ENCODE measurements at regions of chr12 and their contacts with region 1.

Region 1: DNA sequence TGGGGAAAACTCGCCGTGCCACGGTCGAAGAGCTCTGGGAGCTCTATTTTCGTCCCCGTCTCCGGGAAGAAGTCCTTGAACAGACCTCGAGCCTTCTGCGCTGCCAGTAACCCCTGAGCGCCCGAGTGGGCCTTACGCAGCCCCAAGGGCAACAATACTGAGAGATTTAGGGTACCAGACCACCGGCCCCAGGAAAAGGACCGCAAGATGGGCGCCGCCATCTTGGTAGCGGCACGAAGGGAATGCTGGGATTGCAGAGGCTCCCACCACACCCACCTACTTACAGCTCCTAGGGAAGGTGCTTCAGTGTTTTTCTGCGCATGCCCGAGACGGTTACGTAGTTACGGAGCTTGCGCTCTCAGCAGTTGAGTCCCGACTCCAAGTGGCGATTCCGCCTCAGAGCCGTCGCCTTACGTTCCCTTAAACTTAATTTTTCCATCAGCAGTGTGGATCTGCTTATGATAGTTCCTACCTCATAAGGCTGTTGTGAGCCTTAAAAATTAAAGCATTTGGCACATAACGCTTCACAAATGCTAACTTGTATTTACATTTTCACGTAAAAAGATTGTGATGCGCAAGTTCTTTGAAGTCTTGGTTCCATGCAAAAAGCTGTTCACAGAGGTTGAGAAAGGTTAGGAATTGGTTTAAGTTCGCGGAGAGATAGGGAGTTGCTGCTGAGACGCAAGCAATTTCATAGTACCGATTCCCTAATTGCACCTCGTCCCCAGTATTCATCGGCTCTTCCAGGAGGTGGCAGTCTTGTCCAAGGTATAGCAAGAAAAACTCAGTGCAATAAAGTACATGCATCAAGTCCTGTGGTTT is at the start of gene YARS2:
- DNase-seq: peak; percentile 93 to 97 (median 95)
- H3K4me3 ChIP-seq: peak within 1 kb of the TSS; percentile 86 to 100 (median 94)
- H3K27ac ChIP-seq: peak within 1 kb of the TSS; percentile 82 to 89
- H3K4me1 ChIP-seq: peaks cover 12 to 21% (median 14%) of the 10 kb centered on the region in 4 experiments
- H3K27me3 ChIP-seq: no peaks in the 10 kb centered on the region

Region 2: GRCh38 chr12:32918890-32919801 is 163.3 kb after region 1 on chr12:
- CTCF ChIA-PET with region 1: interaction called, 52 read pairs
- POLR2A ChIA-PET with region 1: interaction called, 3 read pairs
- DNase-seq: peak; percentile 29 to 49 (median 45)
- H3K4me3 ChIP-seq: no peak overlapping the region
- H3K27ac ChIP-seq: no peak overlapping the region
- H3K4me1 ChIP-seq: no peaks in the 10 kb centered on the region
- H3K27me3 ChIP-seq: peaks cover 0 to 2% (median 0%) of the 10 kb centered on the region in 5 experiments

Region 3: DNA sequence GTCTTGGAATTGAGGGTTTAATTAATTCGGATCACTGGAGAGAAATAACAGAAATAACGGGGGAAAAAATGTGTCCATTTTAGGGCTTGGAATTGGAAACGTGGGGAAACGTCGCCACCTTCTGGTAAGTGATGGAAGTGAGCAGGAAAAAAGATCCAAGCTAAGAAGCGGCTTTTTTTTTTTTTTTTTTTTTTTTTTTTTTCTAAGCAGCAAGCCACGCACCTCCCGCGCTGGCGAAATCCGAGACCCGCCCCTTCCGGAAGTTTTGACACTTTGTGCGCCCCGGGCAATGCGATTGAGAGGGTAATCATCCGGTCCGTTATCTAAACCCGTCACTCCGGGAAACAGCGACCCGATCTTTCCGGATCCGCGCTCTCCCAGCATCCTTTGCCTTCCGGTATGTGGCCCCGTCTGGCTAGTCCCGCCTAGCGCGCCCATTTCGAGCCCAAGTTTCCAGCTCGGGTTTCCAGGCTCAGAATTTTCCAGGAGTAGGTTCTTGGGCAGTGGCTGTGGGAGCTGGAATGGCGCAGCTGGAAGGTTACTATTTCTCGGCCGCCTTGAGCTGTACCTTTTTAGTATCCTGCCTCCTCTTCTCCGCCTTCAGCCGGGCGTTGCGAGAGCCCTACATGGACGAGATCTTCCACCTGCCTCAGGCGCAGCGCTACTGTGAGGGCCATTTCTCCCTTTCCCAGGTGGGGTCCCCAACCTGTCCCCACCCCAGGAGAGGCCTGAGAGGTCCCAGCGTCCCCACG is 1266.4 kb after region 1 on chr12 and contains the start of gene ALG10:
- CTCF ChIA-PET with region 1: interaction called, 22 read pairs
- POLR2A ChIA-PET with region 1: interaction called, 5 read pairs
- DNase-seq: peak; percentile 97 to 99 (median 99)
- H3K4me3 ChIP-seq: peak within 1 kb of the TSS; percentile 72 to 95 (median 87)
- H3K27ac ChIP-seq: peak within 1 kb of the TSS; percentile 85 to 95
- H3K4me1 ChIP-seq: peaks cover 3 to 17% (median 9%) of the 10 kb centered on the region in 4 experiments
- H3K27me3 ChIP-seq: no peaks in the 10 kb centered on the region

Measured in common myeloid progenitor, CD34-positive (primary cell).